Activated T-helper 2 cell treated with anti-CD3 and anti-CD28 coated beads, Interferon-gamma antibody, Interleukin-2, Interleukin-4, amounts not matched to agents 10 μg/mL and 5 μg/mL and 100 μg/mL, durations not matched to agents 14 hours and 24 hours and 36 hours (primary cell): ENCODE measurements at regions of chr11 and their contacts with region 1.

Region 1: DNA sequence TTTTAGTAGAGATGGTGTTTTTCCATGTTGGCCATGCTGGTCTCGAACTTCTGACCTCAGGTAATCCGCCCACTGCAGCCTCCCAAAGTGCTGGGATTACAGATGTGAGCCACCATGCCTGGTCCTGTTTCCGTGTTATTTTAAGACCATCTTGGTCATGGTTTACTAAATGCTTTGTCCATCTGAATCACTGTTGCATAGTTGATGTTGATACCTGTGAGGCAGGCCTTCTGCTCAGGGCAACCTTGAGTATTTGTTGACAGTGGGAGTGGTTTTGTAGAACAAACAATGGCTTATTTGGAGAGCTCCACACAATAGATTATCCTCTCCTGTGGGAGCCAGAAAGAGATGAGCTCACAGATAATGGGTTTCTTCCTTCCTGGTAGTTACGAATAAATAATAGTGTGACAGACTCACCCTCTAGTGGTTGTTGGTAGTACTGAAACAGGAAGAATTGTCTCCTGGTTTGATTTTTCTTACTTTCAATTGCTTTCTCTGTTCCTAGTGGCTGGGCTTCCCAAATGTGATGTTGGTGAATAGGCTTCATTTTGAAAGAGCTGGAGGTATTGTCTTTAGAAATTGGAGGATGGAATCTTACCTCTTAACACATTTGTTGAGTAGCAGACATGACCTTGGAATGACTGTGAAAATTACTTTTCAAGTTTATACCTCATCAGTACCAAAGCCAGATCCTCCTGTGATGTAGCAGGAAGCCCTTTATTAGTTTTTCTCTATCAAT is 39.0 kb downstream of the CTNND1 start:
- DNase-seq: no peak
- H3K4me3 Mint-ChIP-seq: no peak overlapping the region
- H3K27ac Mint-ChIP-seq: peak overlapping the region; percentile 53
- H3K4me1 Mint-ChIP-seq: peaks cover 29% of the 10 kb centered on the region
- H3K27me3 Mint-ChIP-seq: no peaks in the 10 kb centered on the region

Region 2: DNA sequence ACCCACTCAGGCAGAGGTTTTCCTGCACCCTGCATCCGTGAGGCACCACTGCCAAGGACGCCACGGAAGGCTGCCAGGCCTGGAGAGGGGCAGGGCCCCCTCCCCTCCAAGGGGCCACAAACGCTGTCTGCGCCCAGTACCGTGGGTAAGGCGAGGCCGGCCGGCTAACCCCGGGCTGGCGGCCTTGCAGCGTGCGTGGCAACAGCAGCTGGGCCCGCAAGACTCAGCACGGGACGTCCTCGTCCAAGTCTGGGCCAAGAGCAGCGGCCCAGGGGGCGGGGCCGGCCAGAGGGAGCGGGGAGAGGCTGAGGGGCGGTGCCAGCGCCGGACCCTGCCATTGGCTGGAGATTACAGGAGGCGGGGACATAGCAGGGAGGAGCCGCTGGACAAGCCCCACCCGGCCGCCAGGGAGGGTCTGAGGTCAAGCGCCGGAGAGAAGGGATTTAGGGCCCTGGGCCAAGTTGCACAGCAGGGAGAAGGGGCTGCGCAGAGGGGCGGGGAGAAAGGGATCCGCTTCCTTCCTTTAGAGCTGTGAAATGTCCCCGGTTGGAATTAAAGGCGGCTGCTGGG is 301.1 kb before region 1 on chr11:
- intact Hi-C with region 1: no loop called
- DNase-seq: peak; percentile 26
- H3K4me3 Mint-ChIP-seq: no peak overlapping the region
- H3K27ac Mint-ChIP-seq: no peak overlapping the region
- H3K4me1 Mint-ChIP-seq: no peaks in the 10 kb centered on the region
- H3K27me3 Mint-ChIP-seq: no peaks in the 10 kb centered on the region

Region 3: DNA sequence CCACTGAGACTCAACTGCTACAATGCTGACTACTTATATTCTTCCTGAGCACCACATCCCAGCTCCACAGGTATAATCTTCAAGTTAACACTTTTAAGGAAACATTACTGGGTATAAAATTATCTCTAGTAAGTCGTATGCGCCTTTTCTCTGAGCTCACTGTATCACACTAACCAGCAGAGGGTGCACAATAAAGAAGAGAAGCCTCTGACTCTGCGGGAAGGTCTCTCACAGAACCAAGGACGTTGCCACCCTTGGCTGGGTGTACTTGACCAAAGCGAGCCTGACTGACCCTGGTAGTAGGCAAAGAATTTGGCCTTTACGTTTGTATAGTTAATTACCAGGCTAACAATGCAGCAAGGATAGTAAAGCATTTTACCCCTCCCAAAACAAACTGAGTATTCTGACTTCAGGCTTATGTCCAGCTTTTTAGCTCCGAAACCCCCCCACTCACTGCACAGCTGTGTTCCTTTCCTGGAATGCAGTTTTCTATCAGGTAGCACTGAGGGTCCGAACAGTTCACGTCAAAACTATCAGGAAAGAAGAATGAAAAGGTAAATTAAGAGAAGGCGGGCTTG is 48.8 kb before region 1 on chr11 and contains the start of gene BTBD18:
- intact Hi-C with region 1: loop called (anchors 2 kb)
- DNase-seq: no peak
- H3K4me3 Mint-ChIP-seq: no peak within 1 kb of the TSS
- H3K27ac Mint-ChIP-seq: peak within 1 kb of the TSS; percentile 5
- H3K4me1 Mint-ChIP-seq: peaks cover 7% of the 10 kb centered on the region
- H3K27me3 Mint-ChIP-seq: no peaks in the 10 kb centered on the region
- total RNA-seq, gene BTBD18: not detected in 2 replicates

Region 4: DNA sequence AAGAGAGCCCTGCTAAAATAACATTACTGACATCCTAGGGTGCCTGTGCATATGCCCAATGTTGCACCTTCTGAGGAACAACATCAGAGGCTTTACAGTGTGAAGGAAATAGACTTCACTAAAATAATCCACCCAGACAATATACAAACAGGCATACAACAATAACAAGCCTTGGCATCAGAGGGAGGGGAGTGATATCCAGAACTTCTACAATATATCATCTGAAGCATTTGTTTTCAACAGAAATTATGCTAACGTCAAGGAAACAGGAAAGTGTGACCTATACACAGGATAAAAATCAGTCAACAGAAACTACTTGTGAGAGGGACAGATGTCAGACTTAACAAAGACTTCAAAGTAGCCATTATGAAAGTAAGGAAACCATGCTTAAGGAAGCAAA is 42.3 kb after region 1 on chr11:
- intact Hi-C with region 1: no loop called
- DNase-seq: no peak
- H3K4me3 Mint-ChIP-seq: no peak overlapping the region
- H3K27ac Mint-ChIP-seq: no peak overlapping the region
- H3K4me1 Mint-ChIP-seq: no peaks in the 10 kb centered on the region
- H3K27me3 Mint-ChIP-seq: no peaks in the 10 kb centered on the region